Pancreas (tissue), 10 donors: ENCODE measurements at regions of chr13 and their contacts with region 1.

Region 1: GRCh38 chr13:50829896-50830295 is 13.6 kb downstream of the DLEU7 start:
- DNase-seq: no peak
- ATAC-seq: no peak
- H3K4me3 ChIP-seq: no peak overlapping the region
- H3K27ac ChIP-seq: no peak overlapping the region
- H3K4me1 ChIP-seq: no peaks in the 10 kb centered on the region
- H3K27me3 ChIP-seq: no peaks in the 10 kb centered on the region
- CTCF ChIP-seq: no peak

Region 2: DNA sequence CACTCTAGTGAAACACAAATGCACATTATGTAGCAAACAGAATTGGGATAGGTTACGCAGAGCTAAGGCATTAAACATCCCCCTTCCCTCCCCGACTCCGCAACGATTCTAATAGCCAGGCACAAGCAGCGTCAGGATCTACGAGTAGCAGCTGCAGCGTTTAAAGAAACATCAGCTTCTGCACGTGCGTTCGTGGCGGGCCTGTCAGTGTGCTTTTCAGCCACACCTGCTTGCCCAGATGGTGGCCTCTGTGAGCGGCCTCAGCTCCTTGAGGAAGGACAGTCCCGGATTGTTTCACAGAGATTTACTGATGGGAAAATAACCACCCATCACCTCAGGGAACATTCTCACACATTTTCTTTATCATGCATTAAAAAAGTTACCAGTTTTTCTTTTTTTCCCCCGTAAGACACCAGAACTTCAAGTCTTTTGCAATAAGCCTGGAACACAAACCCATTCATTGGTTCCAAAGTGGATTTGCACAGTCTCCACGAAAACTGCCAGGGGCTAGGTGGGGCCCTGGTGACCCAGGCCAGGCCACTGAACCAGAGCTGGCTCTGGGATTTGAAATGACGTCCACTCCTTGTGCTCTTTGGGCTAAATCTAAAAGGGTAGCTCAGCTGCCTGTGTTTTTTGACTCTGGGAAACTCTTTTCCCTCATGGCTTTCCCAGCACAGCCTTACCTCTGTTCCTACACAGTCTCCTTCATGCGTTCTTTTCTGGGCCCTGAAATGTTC is 489.2 kb before region 1 on chr13:
- intact Hi-C with region 1: no loop called
- DNase-seq: no peak
- ATAC-seq: no peak
- H3K4me3 ChIP-seq: no peak overlapping the region
- H3K27ac ChIP-seq: no peak overlapping the region
- H3K4me1 ChIP-seq: no peaks in the 10 kb centered on the region
- H3K27me3 ChIP-seq: no peaks in the 10 kb centered on the region
- CTCF ChIP-seq: no peak

Region 3: GRCh38 chr13:50685491-50685890 is 144.4 kb before region 1 on chr13:
- intact Hi-C with region 1: no loop called
- DNase-seq: peak in 4 of 6 donors; percentile 23 to 61 (median 42)
- ATAC-seq: peak in 3 of 4 donors; percentile 42 to 74 (median 70)
- H3K4me3 ChIP-seq: no peak overlapping the region
- H3K27ac ChIP-seq: peak overlapping the region in 1 of 4 donors; percentile 19
- H3K4me1 ChIP-seq: peaks cover 0 to 9% (median 8%) of the 10 kb centered on the region in 3 donors
- H3K27me3 ChIP-seq: no peaks in the 10 kb centered on the region
- CTCF ChIP-seq: no peak

Region 4: GRCh38 chr13:50788551-50789210 is 41.2 kb before region 1 on chr13:
- intact Hi-C with region 1: no loop called
- DNase-seq: no peak
- ATAC-seq: no peak
- H3K4me3 ChIP-seq: no peak overlapping the region
- H3K27ac ChIP-seq: no peak overlapping the region
- H3K4me1 ChIP-seq: no peaks in the 10 kb centered on the region
- H3K27me3 ChIP-seq: no peaks in the 10 kb centered on the region
- CTCF ChIP-seq: no peak

Region 5: DNA sequence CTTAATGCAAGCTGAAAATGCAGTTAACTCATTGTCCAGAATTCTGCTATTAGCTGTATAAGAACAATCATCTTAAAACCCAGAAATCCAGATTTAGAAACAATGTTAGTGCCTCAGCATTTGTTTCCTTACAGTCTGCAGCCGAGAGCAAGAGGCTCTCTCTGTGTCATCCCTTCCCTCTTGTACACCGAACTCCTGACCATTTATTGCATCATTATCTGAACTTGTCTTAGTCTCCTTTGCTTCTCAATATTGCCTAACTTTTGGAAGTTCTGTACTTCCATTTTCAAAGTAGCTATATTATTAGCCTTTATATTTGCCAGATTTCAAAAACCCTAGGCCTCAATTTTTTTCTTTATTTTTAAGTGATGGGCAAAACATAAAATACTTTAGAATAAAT is 106.8 kb after region 1 on chr13:
- intact Hi-C with region 1: no loop called
- DNase-seq: no peak
- ATAC-seq: peak in 2 of 4 donors; percentile 71 to 75
- H3K4me3 ChIP-seq: no peak overlapping the region
- H3K27ac ChIP-seq: no peak overlapping the region
- H3K4me1 ChIP-seq: no peaks in the 10 kb centered on the region
- H3K27me3 ChIP-seq: no peaks in the 10 kb centered on the region
- CTCF ChIP-seq: no peak

Region 6: DNA sequence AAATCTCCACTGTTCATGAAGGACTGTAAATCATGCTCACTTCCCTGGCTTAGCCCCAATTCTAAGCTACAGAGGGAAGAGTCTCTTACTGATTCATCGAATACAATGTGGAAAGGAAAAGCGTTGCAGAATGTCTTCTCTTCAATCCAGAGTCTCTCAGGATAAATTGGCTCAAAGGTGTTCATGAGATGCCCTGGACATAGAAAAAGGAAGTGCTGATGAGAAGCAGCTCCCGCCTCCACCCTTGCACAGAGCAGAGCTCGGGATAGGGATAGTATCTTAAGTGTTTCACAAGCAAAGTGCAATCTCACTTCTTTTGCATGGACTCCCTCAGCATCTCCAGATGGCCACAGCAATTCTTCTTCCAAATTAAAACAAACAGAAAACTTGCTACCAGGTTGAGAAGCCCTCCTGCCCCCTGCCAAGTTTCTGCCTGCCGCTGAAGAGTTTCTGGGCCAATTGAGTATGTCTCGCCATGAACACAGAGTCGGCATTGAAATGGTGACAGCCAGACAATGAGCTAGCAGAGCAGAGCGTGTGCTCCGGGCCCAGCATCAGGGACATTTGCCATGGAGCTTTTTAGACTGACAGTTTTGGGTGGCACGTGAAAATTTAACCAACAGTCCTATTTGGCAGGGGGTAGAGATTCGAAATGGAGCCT is 195.5 kb after region 1 on chr13:
- intact Hi-C with region 1: loop called in 1 of 3 experiments (anchors 10 kb)
- DNase-seq: no peak
- ATAC-seq: no peak
- H3K4me3 ChIP-seq: no peak overlapping the region
- H3K27ac ChIP-seq: no peak overlapping the region
- H3K4me1 ChIP-seq: no peaks in the 10 kb centered on the region
- H3K27me3 ChIP-seq: no peaks in the 10 kb centered on the region
- CTCF ChIP-seq: no peak